Endothelial cell of umbilical vein (primary cell): ENCODE measurements at regions of chr19 and their contacts with region 1.

Region 1: DNA sequence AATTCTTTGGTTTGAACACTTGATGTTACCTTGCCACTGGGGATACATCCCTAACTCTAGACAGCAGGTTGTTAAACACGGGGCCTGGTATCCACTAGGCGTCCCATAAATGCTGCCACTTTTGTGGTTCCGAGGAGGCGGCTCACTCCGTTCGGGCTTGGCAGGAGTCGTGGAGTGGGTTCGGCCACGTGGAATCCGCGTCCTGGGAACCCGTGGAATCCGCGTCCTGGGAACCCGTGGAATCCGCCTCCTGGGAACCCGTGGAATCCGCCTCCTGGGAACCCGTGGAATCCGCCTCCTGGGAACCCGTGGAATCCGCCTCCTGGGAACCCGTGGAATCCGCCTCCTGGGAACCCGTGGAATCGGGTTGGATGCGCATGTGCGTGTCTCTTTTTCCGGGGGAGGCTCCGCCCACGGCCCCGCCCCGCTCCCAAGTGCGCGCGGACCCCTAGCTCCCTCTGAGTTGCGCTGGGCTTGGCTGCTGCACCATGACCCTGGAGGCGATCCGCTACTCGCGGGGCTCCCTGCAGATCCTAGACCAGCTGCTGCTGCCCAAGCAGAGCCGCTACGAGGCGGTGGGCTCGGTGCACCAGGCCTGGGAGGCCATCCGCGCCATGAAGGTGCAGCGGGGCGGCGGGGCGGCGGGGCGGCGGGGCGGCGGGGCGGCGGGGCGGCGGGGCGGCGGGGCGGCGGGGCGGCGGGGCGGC is at the start of gene MRI1:
- DNase-seq: peak; percentile 70
- H3K4me3 ChIP-seq: peak within 1 kb of the TSS; percentile 56 to 79 (median 65)
- H3K27ac ChIP-seq: peak within 1 kb of the TSS; percentile 35
- H3K4me1 ChIP-seq: peaks cover 12% of the 10 kb centered on the region
- H3K27me3 ChIP-seq: no peaks in the 10 kb centered on the region
- CTCF ChIP-seq: no peak
- POLR2A ChIP-seq: peak; percentile 83
- total RNA-seq, gene MRI1: 42.3 and 56.2 TPM in 2 replicates

Region 2: GRCh38 chr19:13748169-13748828 is 16.0 kb before region 1 on chr19:
- CTCF ChIA-PET with region 1: interaction called, 3 read pairs
- POLR2A ChIA-PET with region 1: interaction called, 5 read pairs
- dilution Hi-C with region 1: no loop called
- intact Hi-C with region 1: loop called (anchors 2 kb)
- DNase-seq: peak; percentile 42
- H3K4me3 ChIP-seq: peak overlapping the region; percentile 85 to 93 (median 85)
- H3K27ac ChIP-seq: peak overlapping the region; percentile 82
- H3K4me1 ChIP-seq: peaks cover 13% of the 10 kb centered on the region
- H3K27me3 ChIP-seq: no peaks in the 10 kb centered on the region
- CTCF ChIP-seq: no peak
- POLR2A ChIP-seq: peak; percentile 61

Region 3: GRCh38 chr19:14031719-14032480 is 267.6 kb after region 1 on chr19 and contains the start of gene IL27RA:
- CTCF ChIA-PET with region 1: no interaction called
- POLR2A ChIA-PET with region 1: no interaction called
- dilution Hi-C with region 1: no loop called
- intact Hi-C with region 1: no loop called
- DNase-seq: peak; percentile 40
- H3K4me3 ChIP-seq: peak within 1 kb of the TSS; percentile 58 to 67 (median 61)
- H3K27ac ChIP-seq: no peak within 1 kb of the TSS
- H3K4me1 ChIP-seq: peaks cover 6% of the 10 kb centered on the region
- H3K27me3 ChIP-seq: peaks cover 0 to 7% of the 10 kb centered on the region in 2 experiments
- CTCF ChIP-seq: peak; percentile 48 to 77
- POLR2A ChIP-seq: no peak
- total RNA-seq, gene IL27RA: 3.7 and 4.5 TPM in 2 replicates

Region 4: DNA sequence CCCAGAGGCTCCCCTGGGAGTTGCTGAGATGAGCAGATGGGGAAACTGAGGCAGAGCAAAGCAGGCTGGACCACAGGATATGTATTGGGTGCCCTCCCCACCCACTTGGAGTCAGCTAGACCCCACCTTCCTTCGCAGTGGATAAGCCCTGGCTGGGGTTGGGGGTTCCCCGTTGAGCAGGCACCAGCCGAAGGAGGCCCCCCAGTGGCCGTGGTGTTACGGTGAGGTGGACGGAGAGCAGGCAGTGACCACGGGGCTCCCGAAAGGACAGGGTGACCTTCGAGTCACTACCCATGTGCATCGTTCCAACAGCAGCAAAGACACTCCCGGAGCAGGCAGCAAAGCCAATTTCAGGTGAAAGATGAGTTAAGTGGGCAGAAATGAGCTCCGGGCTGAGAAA is 554.6 kb after region 1 on chr19:
- CTCF ChIA-PET with region 1: no interaction called
- POLR2A ChIA-PET with region 1: no interaction called
- dilution Hi-C with region 1: no loop called
- intact Hi-C with region 1: no loop called
- DNase-seq: peak; percentile 29
- H3K4me3 ChIP-seq: no peak overlapping the region
- H3K27ac ChIP-seq: no peak overlapping the region
- H3K4me1 ChIP-seq: no peaks in the 10 kb centered on the region
- H3K27me3 ChIP-seq: no peaks in the 10 kb centered on the region
- CTCF ChIP-seq: peak; percentile 18 to 60
- POLR2A ChIP-seq: no peak